A549 (cell line): ENCODE measurements at regions of chr1 and their contacts with region 1.

Region 1: DNA sequence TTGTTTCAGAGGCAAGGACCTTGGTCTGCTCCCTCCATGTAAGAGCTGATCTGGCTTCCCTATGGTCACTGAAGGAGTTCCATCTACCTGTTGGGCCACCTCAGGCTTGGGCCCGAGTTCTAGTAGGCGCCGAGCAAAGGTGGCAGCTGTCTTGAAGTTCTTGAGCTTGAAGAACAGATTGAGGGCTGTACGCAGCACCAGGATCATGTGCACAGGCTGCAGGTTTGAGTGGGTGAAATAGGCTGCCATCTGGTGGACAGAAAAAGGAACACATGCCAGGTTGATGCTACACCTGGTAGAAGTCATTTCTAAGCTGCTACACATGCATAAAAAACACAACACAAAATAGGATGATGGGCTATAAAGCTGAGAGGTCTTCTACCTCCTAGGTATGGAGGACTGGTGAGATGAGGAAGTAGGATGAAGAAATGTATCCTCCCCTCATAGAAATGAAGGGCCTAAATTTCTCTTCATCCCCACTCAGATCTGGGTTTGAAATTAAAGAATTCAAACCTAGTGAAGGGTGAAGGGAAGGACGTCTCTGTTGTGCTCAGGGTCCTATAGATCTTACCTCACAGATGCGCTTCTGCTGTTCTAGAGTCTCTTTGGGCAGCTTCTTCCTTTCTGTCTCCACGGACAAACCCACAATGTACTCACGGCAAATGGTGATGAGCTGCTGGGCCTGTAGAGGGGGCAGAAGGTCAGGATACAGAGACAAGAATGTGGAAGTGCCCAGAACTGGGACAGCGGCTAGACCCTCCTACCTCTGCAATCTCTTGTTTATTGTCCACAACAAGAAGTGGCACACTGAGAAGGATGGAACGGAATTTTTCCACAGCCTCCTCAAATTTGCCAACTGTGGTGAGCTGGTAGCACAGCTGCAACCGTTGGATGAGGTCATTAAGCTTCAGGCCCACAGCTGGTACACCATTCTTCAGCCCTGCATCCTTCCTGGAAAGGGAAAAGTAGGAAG is 6.6 kb upstream of the PEX19 start:
- DNase-seq: peak; percentile 62 to 76
- ATAC-seq: peak; percentile 92 to 95
- H3K4me3 ChIP-seq: no peak overlapping the region
- H3K27ac ChIP-seq: no peak overlapping the region
- H3K4me1 ChIP-seq: no peaks in the 10 kb centered on the region
- CTCF ChIP-seq: peak; percentile 84
- EP300 ChIP-seq: no peak
- POLR2A ChIP-seq: no peak
- RAD21 ChIP-seq: peak; percentile 51 to 56

Region 2: GRCh38 chr1:160085686-160086455 is 205.7 kb before region 1 on chr1:
- CTCF ChIA-PET with region 1: interaction called, 25 read pairs
- POLR2A ChIA-PET with region 1: no interaction called
- DNase-seq: peak; percentile 83 to 94
- ATAC-seq: peak; percentile 72 to 88
- H3K4me3 ChIP-seq: no peak overlapping the region
- H3K27ac ChIP-seq: no peak overlapping the region
- H3K4me1 ChIP-seq: 0 out of 3 replicates have a peak, but pooled peaks cover 2% of the 10 kb centered on the region
- CTCF ChIP-seq: peak; percentile 82
- EP300 ChIP-seq: no peak
- POLR2A ChIP-seq: no peak
- RAD21 ChIP-seq: peak; percentile 70 to 72

Region 3: DNA sequence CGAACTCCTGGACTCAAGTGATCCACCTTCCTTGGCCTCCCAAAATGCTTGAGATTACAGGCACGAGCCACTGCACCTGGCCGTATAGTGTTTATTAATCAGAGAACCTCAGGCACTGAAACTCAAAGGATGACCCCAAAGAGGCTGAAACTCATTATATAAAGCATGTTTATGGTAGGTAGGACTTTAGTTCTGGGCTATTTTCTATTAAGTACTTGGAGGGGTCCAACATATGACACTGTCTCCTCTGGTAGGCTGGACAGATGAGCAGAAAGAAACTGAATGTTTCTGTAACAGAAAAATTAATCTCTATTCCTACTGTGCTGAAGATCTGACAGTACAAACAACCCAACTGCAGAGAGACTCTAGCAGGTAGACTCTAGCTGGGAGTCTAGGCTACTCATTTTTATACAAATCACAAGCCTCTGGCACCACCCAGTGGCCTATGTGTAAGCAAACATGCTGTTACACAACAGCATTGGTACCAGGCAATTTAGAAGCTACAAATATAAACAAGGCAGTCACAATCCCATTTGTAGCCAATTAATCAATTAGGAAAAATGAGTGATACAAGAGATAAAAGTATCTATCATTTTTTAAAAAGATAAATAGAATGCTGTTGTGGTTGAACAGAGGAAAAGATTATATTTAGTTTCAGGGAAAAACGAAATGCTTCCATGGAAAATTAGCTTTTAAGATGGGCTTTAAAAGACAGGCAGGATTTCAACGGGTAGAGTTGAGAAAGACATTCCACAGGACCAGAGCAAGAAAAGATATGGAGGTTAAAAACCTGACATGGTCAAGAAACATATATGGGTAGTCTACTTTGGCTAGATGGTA is 39.6 kb before region 1 on chr1:
- CTCF ChIA-PET with region 1: interaction called, 20 read pairs
- POLR2A ChIA-PET with region 1: no interaction called
- DNase-seq: peak; percentile 70 to 73
- ATAC-seq: peak; percentile 98 to 99
- H3K4me3 ChIP-seq: no peak overlapping the region
- H3K27ac ChIP-seq: no peak overlapping the region
- H3K4me1 ChIP-seq: peaks cover 16% of the 10 kb centered on the region
- CTCF ChIP-seq: peak; percentile 77
- EP300 ChIP-seq: no peak
- POLR2A ChIP-seq: no peak
- RAD21 ChIP-seq: peak; percentile 83 to 85

Region 4: GRCh38 chr1:160271025-160271424 is 20.5 kb before region 1 on chr1:
- CTCF ChIA-PET with region 1: interaction called, 86 read pairs
- POLR2A ChIA-PET with region 1: no interaction called
- DNase-seq: no peak
- ATAC-seq: no peak
- H3K4me3 ChIP-seq: no peak overlapping the region
- H3K27ac ChIP-seq: no peak overlapping the region
- H3K4me1 ChIP-seq: no peaks in the 10 kb centered on the region
- CTCF ChIP-seq: no peak
- EP300 ChIP-seq: no peak
- POLR2A ChIP-seq: no peak
- RAD21 ChIP-seq: no peak

Region 5: GRCh38 chr1:160307118-160307854 is 15.8 kb after region 1 on chr1:
- CTCF ChIA-PET with region 1: interaction called, 83 read pairs
- POLR2A ChIA-PET with region 1: interaction called, 3 read pairs
- DNase-seq: no peak
- ATAC-seq: no peak
- H3K4me3 ChIP-seq: no peak overlapping the region
- H3K27ac ChIP-seq: no peak overlapping the region
- H3K4me1 ChIP-seq: no peaks in the 10 kb centered on the region
- CTCF ChIP-seq: no peak
- EP300 ChIP-seq: no peak
- POLR2A ChIP-seq: no peak
- RAD21 ChIP-seq: no peak

Region 6: GRCh38 chr1:160328184-160328583 is 36.6 kb after region 1 on chr1:
- CTCF ChIA-PET with region 1: interaction called, 29 read pairs
- POLR2A ChIA-PET with region 1: no interaction called
- DNase-seq: no peak
- ATAC-seq: no peak
- H3K4me3 ChIP-seq: no peak overlapping the region
- H3K27ac ChIP-seq: no peak overlapping the region
- H3K4me1 ChIP-seq: no peaks in the 10 kb centered on the region
- CTCF ChIP-seq: no peak
- EP300 ChIP-seq: no peak
- POLR2A ChIP-seq: no peak
- RAD21 ChIP-seq: no peak

Region 7: DNA sequence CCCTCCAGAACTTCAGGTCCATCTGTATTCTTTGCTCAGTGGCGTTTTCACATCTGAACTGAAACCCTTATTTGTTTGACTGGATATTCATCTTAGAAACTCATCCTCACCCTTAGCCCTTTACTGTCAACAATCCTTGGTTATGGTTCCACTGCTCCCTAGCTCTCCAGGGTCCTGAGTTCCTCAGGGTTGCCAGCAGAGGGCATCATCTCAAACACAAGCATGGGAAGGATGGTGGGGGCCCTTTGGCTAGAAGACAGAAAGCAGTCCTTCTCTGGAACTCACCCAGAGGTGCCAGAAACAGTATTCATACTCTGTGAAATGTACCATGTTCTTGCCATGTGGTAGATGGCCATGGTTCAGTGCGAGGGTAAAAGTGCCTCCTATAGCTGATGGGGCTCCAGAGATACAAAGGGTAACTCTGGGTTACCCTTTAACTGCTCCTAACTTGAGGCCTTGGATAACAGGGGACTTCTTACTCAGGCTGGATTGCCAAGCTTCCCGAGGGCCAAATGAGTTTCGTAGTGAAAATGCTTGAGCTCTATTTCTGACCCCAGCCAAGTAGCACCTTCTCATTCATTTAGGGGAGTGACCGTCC is 63.0 kb after region 1 on chr1:
- CTCF ChIA-PET with region 1: interaction called, 24 read pairs
- POLR2A ChIA-PET with region 1: no interaction called
- DNase-seq: peak; percentile 30 to 48
- ATAC-seq: peak; percentile 65 to 88; a peak in 4 of 6 replicates
- H3K4me3 ChIP-seq: no peak overlapping the region
- H3K27ac ChIP-seq: no peak overlapping the region
- H3K4me1 ChIP-seq: no peaks in the 10 kb centered on the region
- CTCF ChIP-seq: peak; percentile 43
- EP300 ChIP-seq: no peak
- POLR2A ChIP-seq: no peak
- RAD21 ChIP-seq: no peak

Region 8: GRCh38 chr1:160575112-160575664 is 283.7 kb after region 1 on chr1:
- CTCF ChIA-PET with region 1: no interaction called
- POLR2A ChIA-PET with region 1: no interaction called
- DNase-seq: no peak
- ATAC-seq: no peak
- H3K4me3 ChIP-seq: no peak overlapping the region
- H3K27ac ChIP-seq: no peak overlapping the region
- H3K4me1 ChIP-seq: no peaks in the 10 kb centered on the region
- CTCF ChIP-seq: no peak
- EP300 ChIP-seq: no peak
- POLR2A ChIP-seq: no peak
- RAD21 ChIP-seq: no peak